Body of pancreas (tissue), 4 donors: ENCODE measurements at regions of chr18 and their contacts with region 1.

Region 1: GRCh38 chr18:9711361-9712129 is 3.4 kb downstream of the RAB31 start:
- DNase-seq: peak in 1 of 4 donors; percentile 48
- ATAC-seq: no peak
- H3K4me3 ChIP-seq: no peak overlapping the region
- H3K27ac ChIP-seq: peak overlapping the region in 1 of 4 donors; percentile 17
- H3K4me1 ChIP-seq: peaks cover 18% of the 10 kb centered on the region
- H3K27me3 ChIP-seq: no peaks in the 10 kb centered on the region
- CTCF ChIP-seq: no peak
- POLR2A ChIP-seq: no peak

Region 2: GRCh38 chr18:9428301-9428706 is 283.2 kb before region 1 on chr18:
- intact Hi-C with region 1: no loop called
- DNase-seq: no peak
- ATAC-seq: no peak
- H3K4me3 ChIP-seq: no peak overlapping the region
- H3K27ac ChIP-seq: no peak overlapping the region
- H3K4me1 ChIP-seq: no peaks in the 10 kb centered on the region
- H3K27me3 ChIP-seq: no peaks in the 10 kb centered on the region
- CTCF ChIP-seq: no peak
- POLR2A ChIP-seq: no peak

Region 3: GRCh38 chr18:9552191-9552590 is 159.4 kb before region 1 on chr18:
- intact Hi-C with region 1: no loop called
- DNase-seq: no peak
- ATAC-seq: no peak
- H3K4me3 ChIP-seq: no peak overlapping the region
- H3K27ac ChIP-seq: no peak overlapping the region
- H3K4me1 ChIP-seq: no peaks in the 10 kb centered on the region
- H3K27me3 ChIP-seq: no peaks in the 10 kb centered on the region
- CTCF ChIP-seq: no peak
- POLR2A ChIP-seq: no peak

Region 4: DNA sequence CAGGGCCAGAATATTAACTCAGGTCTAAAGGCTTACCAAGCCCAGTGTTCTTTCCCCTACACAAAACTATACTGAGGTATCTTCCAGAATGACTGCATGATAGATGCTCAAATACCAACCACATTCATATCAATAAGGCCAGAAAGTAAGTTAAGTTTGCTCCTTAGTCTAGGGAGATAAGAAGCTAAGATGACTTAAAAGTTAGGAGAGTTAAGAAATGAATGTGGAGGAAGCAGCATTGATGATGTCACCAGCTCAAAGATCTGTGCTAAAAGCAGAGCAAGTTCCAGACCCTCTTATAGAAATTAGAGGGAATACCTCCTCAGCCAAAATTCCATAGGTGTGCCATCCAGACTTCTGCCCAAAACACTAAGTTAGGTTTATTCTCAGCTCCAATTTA is 103.2 kb before region 1 on chr18:
- intact Hi-C with region 1: loop called (anchors 10 kb)
- DNase-seq: no peak
- ATAC-seq: no peak
- H3K4me3 ChIP-seq: no peak overlapping the region
- H3K27ac ChIP-seq: peak overlapping the region in 2 of 4 donors; percentile 23 to 28
- H3K4me1 ChIP-seq: peaks cover 32% of the 10 kb centered on the region
- H3K27me3 ChIP-seq: no peaks in the 10 kb centered on the region
- CTCF ChIP-seq: no peak
- POLR2A ChIP-seq: no peak